Posterior cingulate gyrus (tissue), 11 donors: ENCODE measurements at regions of chr15 and their contacts with region 1.

Region 1: GRCh38 chr15:83011271-83012075 is at the start of gene C15orf40:
- DNase-seq: peak; percentile 83 to 98 (median 90)

Region 2: GRCh38 chr15:82749951-82750830 is 261.3 kb before region 1 on chr15:
- intact Hi-C with region 1: loop called (anchors 2 kb)
- DNase-seq: peak; percentile 91 to 99 (median 94)

Region 3: GRCh38 chr15:82809404-82810060 is 201.9 kb before region 1 on chr15 and contains the start of gene WHAMM:
- intact Hi-C with region 1: loop called (anchors 5 kb)
- DNase-seq: peak; percentile 96 to 100 (median 99)

Region 4: GRCh38 chr15:83066734-83067637 is 55.5 kb after region 1 on chr15 and contains the start of gene BTBD1:
- intact Hi-C with region 1: loop called (anchors 1 kb)
- DNase-seq: peak; percentile 74 to 99 (median 85)

Region 5: GRCh38 chr15:83127648-83128047 is 116.2 kb after region 1 on chr15:
- intact Hi-C with region 1: loop called (anchors 10 kb)
- DNase-seq: no peak